Ascending aorta (tissue), 2 donors: ENCODE measurements at regions of chr10 and their contacts with region 1.

Region 1: GRCh38 chr10:32207544-32207943 is 139.4 kb downstream of the EPC1 start:
- DNase-seq: peak; percentile 12 to 69
- H3K4me3 ChIP-seq: no peak overlapping the region
- H3K27ac ChIP-seq: no peak overlapping the region
- H3K4me1 ChIP-seq: no peaks in the 10 kb centered on the region
- H3K27me3 ChIP-seq: no peaks in the 10 kb centered on the region
- CTCF ChIP-seq: peak; percentile 61 to 76 (median 63)

Region 2: GRCh38 chr10:32041290-32042028 is 166.1 kb before region 1 on chr10:
- intact Hi-C with region 1: loop called (anchors 5 kb)
- DNase-seq: no peak
- H3K4me3 ChIP-seq: no peak overlapping the region
- H3K27ac ChIP-seq: peak overlapping the region; percentile 17 to 64
- H3K4me1 ChIP-seq: peaks cover 0 to 24% of the 10 kb centered on the region in 2 donors
- H3K27me3 ChIP-seq: no peaks in the 10 kb centered on the region
- CTCF ChIP-seq: no peak

Region 3: DNA sequence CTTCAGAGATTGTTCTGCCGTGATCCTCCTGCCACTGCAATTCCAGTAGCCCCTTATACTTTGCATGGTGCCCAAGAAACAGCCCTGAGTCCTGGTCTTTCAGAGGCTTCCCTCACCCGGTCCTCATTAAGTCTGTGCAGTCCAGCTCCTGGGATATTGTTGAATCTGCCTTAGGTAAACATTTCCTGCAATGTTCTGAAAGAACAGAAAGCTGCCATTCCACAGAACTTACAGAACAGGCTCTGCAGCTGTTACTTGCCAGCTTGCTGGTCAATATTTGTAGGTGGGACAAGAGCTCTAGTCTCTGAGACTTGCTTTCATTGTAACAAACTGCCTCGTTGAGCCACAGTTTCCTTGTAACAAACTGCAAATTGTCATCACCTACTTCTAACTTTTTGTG is 36.3 kb before region 1 on chr10:
- intact Hi-C with region 1: no loop called
- DNase-seq: peak in 1 of 2 donors; percentile 1
- H3K4me3 ChIP-seq: no peak overlapping the region
- H3K27ac ChIP-seq: no peak overlapping the region
- H3K4me1 ChIP-seq: no peaks in the 10 kb centered on the region
- H3K27me3 ChIP-seq: no peaks in the 10 kb centered on the region
- CTCF ChIP-seq: no peak